Posterior cingulate gyrus (tissue), 11 donors: ENCODE measurements at regions of chr16 and their contacts with region 1.

Region 1: GRCh38 chr16:86519649-86520316 is 9.5 kb downstream of the FOXF1 start:
- DNase-seq: peak in 9 of 10 donors; percentile 37 to 92 (median 59)

Region 2: GRCh38 chr16:86072328-86073102 is 447.3 kb before region 1 on chr16:
- intact Hi-C with region 1: loop called (anchors 1 kb)
- DNase-seq: peak in 9 of 10 donors; percentile 52 to 95 (median 74)

Region 3: DNA sequence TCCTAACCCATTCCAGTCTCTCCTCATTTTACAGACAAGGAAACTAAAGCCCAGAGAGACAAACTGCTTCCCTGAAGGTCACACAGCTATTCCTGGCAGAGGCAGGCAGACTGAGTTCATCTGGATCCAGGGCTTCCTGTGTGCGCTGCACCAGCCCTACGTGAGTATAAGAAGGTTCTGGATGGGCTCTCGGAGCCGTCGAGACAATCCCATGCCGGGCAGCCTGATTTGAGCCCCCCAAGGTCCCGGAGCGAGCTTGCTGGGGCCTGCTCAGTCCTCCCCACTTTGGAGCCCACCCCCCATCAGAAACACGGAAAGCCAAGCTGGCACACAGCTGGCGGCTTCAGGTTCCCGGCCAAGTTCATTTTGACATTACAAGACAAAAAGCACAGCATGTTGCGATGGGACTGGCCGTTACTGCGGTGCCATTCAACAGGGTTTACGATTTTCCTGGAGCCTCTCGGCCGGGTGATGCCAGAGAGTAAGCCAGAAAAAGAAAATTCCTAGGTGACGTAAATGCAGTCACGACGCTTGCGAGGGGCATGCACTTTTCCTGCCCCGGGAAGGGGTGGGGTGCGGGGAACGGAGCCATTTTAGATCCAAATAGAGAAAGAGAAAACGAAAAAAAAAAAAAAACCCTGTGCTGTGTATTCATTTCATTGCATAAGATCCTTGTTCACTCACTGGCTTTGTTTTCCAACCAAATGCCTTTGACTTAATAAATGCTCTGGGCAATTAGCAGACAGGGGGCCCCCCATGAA is 176.6 kb before region 1 on chr16:
- intact Hi-C with region 1: loop called (anchors 1 kb)
- DNase-seq: peak in 1 of 10 donors; percentile 74

Region 4: DNA sequence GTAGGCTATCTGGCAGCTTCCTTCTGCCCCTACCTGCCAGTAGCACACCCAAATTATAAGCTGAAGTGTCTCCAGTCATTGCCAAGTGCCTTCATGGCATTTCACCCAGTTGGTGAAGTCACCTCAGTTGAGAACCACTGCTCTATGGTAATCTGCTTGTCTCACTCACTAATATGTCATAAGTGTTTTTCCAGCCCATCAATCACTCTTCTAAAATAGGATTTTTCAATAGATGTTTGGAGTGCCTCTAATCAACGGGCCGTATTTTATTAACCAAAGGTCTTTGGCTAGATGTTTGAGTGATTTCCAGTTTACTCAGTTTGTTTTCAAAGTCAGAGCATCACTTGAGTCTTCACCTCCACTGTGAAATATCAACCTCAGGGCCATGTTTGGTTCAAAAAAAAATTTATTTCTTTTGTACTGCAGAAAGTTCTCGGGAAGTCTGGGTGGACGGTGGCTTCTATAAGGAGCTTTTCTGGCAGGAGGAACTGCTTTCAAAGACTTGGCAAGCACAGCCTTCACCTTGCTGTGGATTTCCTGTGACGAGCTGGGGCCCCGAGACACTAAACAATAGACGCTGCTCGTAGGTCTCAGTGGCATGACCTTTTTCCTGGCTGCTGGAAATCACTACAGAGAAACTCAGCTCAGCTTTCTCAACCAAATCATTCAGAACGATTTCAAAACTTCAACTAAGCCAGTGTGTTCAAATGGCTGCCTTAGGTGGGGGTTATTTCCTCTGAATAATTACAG is 104.6 kb before region 1 on chr16:
- intact Hi-C with region 1: no loop called
- DNase-seq: no peak

Region 5: DNA sequence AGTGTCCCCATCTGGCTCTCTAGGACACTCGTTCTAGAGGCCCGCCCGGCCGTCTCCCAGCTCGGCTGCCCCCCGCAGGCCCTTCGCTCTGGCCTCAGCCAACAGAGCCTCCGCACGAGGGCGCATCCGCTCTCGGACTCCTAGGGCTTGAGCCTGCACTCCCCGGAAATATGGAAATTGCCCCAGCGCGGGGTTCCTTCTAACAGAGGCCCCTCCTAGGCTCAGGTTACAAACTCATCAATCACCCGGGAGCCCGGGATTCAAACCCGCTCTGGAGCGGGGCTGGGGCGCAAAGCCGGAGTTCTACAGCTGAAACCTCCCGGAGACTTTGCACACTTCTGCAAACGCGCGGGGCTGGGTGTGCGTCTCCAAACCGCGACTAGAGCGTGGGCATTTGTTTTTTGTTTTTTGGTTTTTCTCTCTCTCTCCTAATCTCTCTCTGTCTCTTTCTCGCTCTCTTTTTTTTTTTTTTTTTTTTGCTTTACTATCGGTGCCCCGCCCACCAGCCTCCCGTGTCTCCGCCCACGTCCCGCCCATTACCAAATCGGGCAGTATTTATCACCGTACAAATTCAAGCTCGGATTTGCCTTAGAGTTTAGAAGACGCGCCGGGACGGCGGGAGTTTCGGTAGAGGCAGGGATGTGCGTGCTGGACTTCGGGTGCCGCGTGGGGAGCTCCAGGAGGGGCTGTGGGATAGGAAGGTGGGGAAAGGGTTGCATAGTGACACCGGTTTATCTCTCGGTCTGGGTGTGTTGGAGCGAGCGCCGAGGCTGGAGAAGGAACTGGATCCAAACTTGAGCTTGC is 56.2 kb after region 1 on chr16:
- intact Hi-C with region 1: no loop called
- DNase-seq: no peak

Region 6: DNA sequence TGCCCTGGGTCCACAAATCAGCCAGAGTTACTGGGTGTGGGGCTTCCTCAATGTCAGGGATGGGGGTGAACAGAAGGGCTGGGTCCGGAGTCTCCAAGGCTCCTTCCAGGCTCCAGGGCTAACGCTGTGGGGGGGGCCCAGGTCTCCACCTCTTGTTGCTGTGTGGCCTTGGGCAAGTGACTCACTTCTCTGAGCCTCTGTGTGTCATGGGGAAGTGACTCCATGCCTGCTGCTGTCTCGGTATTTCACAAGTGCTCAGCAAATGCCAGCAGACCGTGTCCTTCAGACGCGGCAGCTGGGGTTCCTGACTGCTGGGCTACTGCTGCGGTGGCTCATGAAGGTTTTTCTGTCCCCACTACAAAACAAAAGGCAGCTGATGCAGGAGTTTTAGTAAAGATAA is 1109.2 kb after region 1 on chr16:
- intact Hi-C with region 1: no loop called
- DNase-seq: peak in 1 of 10 donors; percentile 69